ENCODE measurements at regions of chr18 and their contacts with region 1.

Region 1: DNA sequence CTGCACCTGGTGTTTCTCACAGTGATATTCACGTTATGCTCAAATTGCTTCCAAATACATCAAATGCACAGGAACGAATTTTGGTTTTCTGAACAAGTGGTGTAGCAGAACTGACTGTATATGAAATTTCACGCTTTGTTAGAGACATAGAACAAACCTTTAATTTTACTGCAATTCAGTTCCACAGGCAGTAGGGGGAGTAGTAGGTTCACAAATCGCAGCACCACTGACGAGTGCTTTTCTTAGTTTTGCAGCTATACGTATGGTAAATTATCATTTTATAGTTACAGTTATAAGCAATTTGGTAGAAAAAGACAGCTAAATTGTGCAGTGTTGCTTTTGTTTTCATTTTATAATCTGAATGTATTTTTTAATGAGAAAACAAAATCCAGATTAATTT is 113.3 kb downstream of the KIAA1328 start:
- DNase-seq: no peak
- H3K4me3 ChIP-seq: no peak overlapping the region
- H3K27ac ChIP-seq: no peak overlapping the region
- H3K4me1 ChIP-seq: peaks cover 0 to 15% (median 0%) of the 10 kb centered on the region in 4 experiments; a peak in 2 of 7 replicates
- H3K27me3 ChIP-seq: no peaks in the 10 kb centered on the region
- CTCF ChIP-seq: peak in 2 of 3 experiments; percentile 73 to 87; a peak in 3 of 4 replicates
- EP300 ChIP-seq: no peak
- POLR2A ChIP-seq: no peak
- RAD21 ChIP-seq: peak; percentile 96 to 97

Region 2: GRCh38 chr18:36960038-36960437 is 17.8 kb after region 1 on chr18:
- CTCF ChIA-PET with region 1: interaction called, 12 read pairs
- POLR2A ChIA-PET with region 1: no interaction called
- DNase-seq: no peak
- H3K4me3 ChIP-seq: no peak overlapping the region
- H3K27ac ChIP-seq: no peak overlapping the region
- H3K4me1 ChIP-seq: 0 out of 7 replicates have a peak, but pooled peaks cover 0 to 2% (median 0%) of the 10 kb centered on the region in 4 experiments
- H3K27me3 ChIP-seq: no peaks in the 10 kb centered on the region
- CTCF ChIP-seq: no peak
- EP300 ChIP-seq: no peak
- POLR2A ChIP-seq: no peak
- RAD21 ChIP-seq: no peak

Region 3: GRCh38 chr18:37253394-37254235 is 311.4 kb after region 1 on chr18:
- CTCF ChIA-PET with region 1: interaction called, 40 read pairs
- POLR2A ChIA-PET with region 1: no interaction called
- DNase-seq: peak in 1 of 2 experiments; percentile 78
- H3K4me3 ChIP-seq: peak overlapping the region; percentile 64 to 88 (median 66)
- H3K27ac ChIP-seq: no peak overlapping the region
- H3K4me1 ChIP-seq: peaks cover 0 to 15% (median 6%) of the 10 kb centered on the region in 4 experiments; a peak in 6 of 7 replicates
- H3K27me3 ChIP-seq: peaks cover 5 to 31% (median 22%) of the 10 kb centered on the region in 4 experiments
- CTCF ChIP-seq: peak; percentile 33 to 51 (median 42)
- EP300 ChIP-seq: no peak
- POLR2A ChIP-seq: 0 out of 3 replicates have a peak, but pooled peaks of 1 of the 2 experiments have one; percentile 37
- RAD21 ChIP-seq: peak in 1 of 2 experiments; percentile 38; a peak in 2 of 4 replicates

Region 4: DNA sequence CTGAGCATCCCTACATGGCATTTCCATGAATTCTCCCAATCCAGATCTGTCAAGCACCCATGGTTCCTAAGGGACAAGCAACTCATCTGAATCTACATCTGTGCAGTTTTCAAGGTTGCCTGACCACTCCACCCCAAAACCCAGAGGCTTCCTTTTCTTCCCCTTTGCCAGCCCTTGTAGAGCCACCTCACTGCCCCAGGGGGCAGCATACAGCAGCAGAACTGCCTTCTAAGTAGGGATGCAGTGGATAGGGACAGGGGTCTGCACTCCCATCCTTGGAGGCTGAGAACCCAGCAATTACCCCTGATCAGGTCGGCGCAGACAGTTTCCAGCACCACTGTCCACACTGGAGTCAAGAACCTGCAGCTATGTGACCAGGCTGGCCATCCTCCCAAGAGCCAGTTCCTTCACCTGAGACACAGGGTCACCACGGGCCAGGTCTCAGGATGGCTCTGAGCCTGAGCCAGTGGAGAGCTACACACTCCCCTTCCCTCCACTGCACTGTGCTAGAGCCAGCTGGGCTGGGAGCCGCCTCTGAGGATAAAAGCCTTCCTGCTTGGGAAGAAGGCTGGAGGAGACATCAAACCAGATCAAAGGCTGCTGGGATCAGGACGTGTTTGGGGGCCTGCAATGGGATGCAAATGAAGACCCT is 340.2 kb after region 1 on chr18:
- CTCF ChIA-PET with region 1: interaction called, 12 read pairs
- POLR2A ChIA-PET with region 1: no interaction called
- DNase-seq: no peak
- H3K4me3 ChIP-seq: no peak overlapping the region
- H3K27ac ChIP-seq: no peak overlapping the region
- H3K4me1 ChIP-seq: peaks cover 0 to 3% (median 0%) of the 10 kb centered on the region in 4 experiments; a peak in 2 of 7 replicates
- H3K27me3 ChIP-seq: no peaks in the 10 kb centered on the region; a peak in 1 of 7 replicates
- CTCF ChIP-seq: peak; percentile 76 to 83 (median 82)
- EP300 ChIP-seq: no peak
- POLR2A ChIP-seq: no peak
- RAD21 ChIP-seq: peak; percentile 56 to 71

Region 5: DNA sequence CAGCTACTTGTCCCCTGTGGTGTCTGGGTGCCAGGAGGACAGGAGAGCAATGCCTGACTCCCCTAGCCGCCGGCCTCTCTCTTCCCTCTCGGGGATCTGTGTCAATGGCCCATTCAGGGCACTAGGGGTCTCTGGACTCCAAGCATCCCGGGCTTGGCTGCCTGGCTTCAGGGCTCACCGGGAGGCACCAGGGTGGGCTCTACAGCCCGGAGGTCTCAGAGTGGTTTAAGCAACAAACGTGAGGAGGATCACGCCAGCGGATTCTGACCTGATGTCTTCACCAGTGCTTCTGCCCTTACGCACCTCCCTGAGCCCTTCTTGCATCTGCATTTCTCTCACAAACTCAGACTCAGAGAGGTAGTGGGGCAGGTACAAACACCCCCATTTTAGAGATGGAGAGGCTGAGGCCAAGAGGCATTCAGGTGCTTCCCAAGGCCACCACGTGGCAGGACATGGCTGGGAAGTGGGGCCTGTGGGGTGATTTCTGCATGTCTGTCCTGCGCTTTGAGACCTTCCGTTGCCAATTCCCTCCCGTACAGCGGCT is 380.3 kb after region 1 on chr18:
- CTCF ChIA-PET with region 1: interaction called, 18 read pairs
- POLR2A ChIA-PET with region 1: no interaction called
- DNase-seq: peak; percentile 29 to 85
- H3K4me3 ChIP-seq: no peak overlapping the region
- H3K27ac ChIP-seq: no peak overlapping the region
- H3K4me1 ChIP-seq: peaks cover 0 to 10% (median 5%) of the 10 kb centered on the region in 4 experiments; a peak in 6 of 7 replicates
- H3K27me3 ChIP-seq: no peaks in the 10 kb centered on the region
- CTCF ChIP-seq: peak in 2 of 3 experiments; percentile 83 to 92; a peak in 3 of 4 replicates
- EP300 ChIP-seq: no peak
- POLR2A ChIP-seq: no peak
- RAD21 ChIP-seq: peak; percentile 87 to 92

Region 6: DNA sequence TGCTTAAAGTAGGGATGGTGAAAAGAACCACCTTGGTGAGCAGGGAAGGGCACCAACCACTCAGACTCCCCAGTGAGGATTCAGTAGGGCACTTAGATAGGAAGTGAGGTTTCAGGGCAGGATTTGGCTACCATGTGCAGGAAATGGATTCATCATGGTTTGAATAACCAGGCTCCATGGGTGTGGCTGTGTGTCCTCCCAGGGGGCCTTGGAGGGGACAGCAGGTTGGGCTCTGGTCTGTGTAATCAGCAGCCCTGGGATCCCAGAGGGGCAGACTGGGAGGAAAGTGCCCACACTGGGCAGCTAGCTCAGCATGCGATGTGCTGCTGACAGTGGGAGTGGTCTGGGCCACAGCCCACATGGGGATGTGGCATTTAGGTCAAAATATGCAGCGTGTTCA is 398.8 kb after region 1 on chr18:
- CTCF ChIA-PET with region 1: interaction called, 20 read pairs
- POLR2A ChIA-PET with region 1: no interaction called
- DNase-seq: no peak
- H3K4me3 ChIP-seq: no peak overlapping the region
- H3K27ac ChIP-seq: no peak overlapping the region
- H3K4me1 ChIP-seq: peaks cover 0 to 4% (median 2%) of the 10 kb centered on the region in 4 experiments; a peak in 4 of 7 replicates
- H3K27me3 ChIP-seq: peaks cover 0 to 8% (median 0%) of the 10 kb centered on the region in 4 experiments; a peak in 1 of 7 replicates
- CTCF ChIP-seq: no peak
- EP300 ChIP-seq: no peak
- POLR2A ChIP-seq: no peak
- RAD21 ChIP-seq: no peak